Pancreas (tissue), 10 donors: ENCODE measurements at regions of chr3 and their contacts with region 1.

Region 1: GRCh38 chr3:49021813-49022687 is at the start of gene NDUFAF3:
- DNase-seq: peak; percentile 90 to 97 (median 96)
- ATAC-seq: peak; percentile 80 to 87 (median 82)
- H3K4me3 ChIP-seq: peak within 1 kb of the TSS; percentile 73 to 95 (median 92)
- H3K27ac ChIP-seq: peak within 1 kb of the TSS; percentile 94 to 100 (median 99)
- H3K4me1 ChIP-seq: peaks cover 3 to 28% (median 7%) of the 10 kb centered on the region in 3 donors
- H3K27me3 ChIP-seq: no peaks in the 10 kb centered on the region
- CTCF ChIP-seq: peak; percentile 94 to 98 (median 96)
- total RNA-seq, gene NDUFAF3: 20.9 to 33.9 (median 30.6) TPM

Region 2: GRCh38 chr3:49081429-49081828 is 59.4 kb after region 1 on chr3:
- intact Hi-C with region 1: no loop called
- DNase-seq: no peak
- ATAC-seq: no peak
- H3K4me3 ChIP-seq: no peak overlapping the region
- H3K27ac ChIP-seq: no peak overlapping the region
- H3K4me1 ChIP-seq: no peaks in the 10 kb centered on the region
- H3K27me3 ChIP-seq: no peaks in the 10 kb centered on the region
- CTCF ChIP-seq: no peak

Region 3: GRCh38 chr3:49093853-49094767 is 72.1 kb after region 1 on chr3 and contains the start of gene QRICH1:
- intact Hi-C with region 1: loop called in 1 of 3 experiments (anchors 10 kb)
- DNase-seq: peak; percentile 95 to 99 (median 97)
- ATAC-seq: peak; percentile 90 to 95 (median 91)
- H3K4me3 ChIP-seq: peak within 1 kb of the TSS; percentile 83 to 99 (median 86)
- H3K27ac ChIP-seq: peak within 1 kb of the TSS; percentile 81 to 94 (median 89)
- H3K4me1 ChIP-seq: peaks cover 12 to 29% (median 13%) of the 10 kb centered on the region in 3 donors
- H3K27me3 ChIP-seq: no peaks in the 10 kb centered on the region
- CTCF ChIP-seq: peak in 2 of 4 donors; percentile 7 to 35
- total RNA-seq, gene QRICH1: 20.9 to 48.1 (median 28.2) TPM